ENCODE measurements at regions of chr17 and their contacts with region 1.

Region 1: DNA sequence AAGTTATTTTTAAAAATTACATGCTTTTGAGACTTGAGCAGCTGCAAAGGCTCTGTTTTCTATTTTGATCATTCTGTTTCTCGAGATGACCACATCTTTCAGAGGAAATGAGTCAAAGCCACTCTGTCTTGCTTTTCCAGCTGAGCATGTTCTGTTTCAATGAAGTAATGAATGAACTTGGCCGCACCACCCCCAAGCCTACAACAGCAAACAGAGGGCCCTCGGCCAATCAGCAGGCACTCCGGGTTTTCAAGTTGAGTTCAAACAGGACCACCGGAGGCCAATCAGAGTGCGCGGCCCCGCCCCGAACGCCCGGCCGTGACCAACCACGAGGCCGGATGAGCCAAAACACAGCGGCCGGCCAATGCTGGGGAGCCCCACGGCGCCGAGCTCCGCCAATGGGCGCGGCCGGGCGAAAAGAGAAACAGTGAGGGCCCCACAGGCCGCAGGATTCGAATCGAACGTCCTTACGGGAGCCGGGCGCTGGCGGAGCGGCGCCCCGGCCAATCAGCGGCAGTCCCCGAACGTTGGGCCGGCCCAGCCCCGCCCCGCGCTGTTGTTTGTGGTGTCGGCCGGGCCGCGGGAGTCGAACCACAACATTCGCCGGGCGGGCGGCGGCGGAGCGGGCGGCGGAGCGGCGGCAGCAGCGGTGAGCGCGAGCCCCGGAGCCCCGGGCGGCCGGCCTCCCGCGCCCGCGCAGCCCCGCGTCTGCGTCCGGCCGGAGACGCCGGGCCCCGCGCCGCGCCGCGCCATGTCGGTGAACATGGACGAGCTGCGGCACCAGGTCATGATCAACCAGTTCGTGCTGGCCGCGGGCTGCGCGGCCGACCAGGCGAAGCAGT is at the start of gene UBALD2:
- DNase-seq: peak; percentile 100
- ATAC-seq: peak; percentile 95
- total RNA-seq, gene UBALD2: 30.4 TPM

Region 2: GRCh38 chr17:76196675-76197074 is 68.3 kb before region 1 on chr17:
- intact Hi-C with region 1: loop called (anchors 5 kb)
- DNase-seq: peak; percentile 77
- ATAC-seq: peak; percentile 91

Region 3: DNA sequence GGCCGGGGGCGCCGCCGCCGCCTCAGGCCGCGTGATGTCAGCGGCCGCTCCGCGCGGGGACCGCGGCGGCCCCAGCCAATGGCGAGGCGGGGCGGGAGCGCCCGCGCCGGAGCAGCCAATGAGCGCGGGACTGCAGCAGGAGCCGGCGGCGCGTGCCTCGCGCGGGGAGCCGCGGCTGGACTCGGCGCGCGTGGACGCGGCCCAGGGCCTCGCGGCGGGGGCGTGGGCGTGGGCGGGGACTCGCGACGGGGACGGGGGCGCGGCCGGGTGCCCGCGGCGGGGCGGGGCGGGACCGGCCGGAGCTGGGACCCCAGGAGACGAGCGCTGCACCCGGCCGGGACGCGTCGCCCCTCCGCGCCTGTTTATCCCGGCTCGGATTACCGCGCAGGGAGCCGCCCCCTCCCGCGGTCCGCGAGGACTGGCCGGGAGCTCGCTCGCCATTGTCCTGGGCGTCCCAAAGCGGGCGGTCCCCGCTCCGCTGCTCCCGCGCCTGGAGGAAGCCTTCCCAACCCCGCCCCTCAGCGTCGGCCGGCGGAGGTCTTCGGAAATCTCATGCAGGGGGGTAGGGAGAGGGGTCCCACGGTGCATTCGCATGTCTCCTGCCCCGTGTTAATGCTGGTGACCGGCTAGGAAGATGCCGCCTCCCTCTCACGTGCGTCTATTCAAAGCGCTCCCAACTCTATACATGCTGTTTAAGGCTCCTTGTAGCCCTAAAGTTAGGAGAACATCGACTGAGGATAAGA is 24.3 kb before region 1 on chr17 and contains the start of gene RNF157:
- intact Hi-C with region 1: loop called (anchors 2 kb)
- DNase-seq: peak; percentile 90
- ATAC-seq: peak; percentile 87
- total RNA-seq, gene RNF157: 19.4 TPM

Measured in Right ventricle myocardium inferior (tissue), 1 donor.